Heart right ventricle (tissue), 16 donors: ENCODE measurements at regions of chr7 and their contacts with region 1.

Region 1: DNA sequence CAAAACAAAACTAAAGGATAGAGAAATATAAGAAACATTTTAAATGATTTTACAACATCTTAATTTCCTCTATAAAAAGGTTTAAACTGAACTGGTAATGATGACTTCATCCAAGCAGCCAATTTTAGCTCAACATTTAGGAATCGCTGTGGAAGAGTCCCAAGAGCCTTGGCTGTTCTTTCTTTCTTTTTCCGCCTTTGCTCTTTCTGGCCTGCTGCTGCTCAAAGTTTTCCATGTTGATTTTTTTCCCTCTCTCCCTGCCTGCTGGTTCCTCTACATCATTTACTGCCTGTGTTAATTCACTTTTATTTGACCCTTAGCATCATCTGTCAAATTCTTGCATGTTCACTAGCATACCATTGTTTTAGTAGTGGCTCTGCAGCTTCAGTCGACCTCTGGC is 146.9 kb downstream of the EVX1 start:
- DNase-seq: peak in 1 of 2 donors; percentile 27
- ATAC-seq: peak in 7 of 8 donors; percentile 42 to 80 (median 70)
- H3K4me3 ChIP-seq: no peak overlapping the region
- H3K27ac ChIP-seq: peak overlapping the region in 9 of 10 donors; percentile 16 to 79 (median 52)
- H3K4me1 ChIP-seq: peaks cover 0 to 4% (median 0%) of the 10 kb centered on the region in 9 donors
- H3K27me3 ChIP-seq: peaks cover 0 to 25% (median 10%) of the 10 kb centered on the region in 7 donors
- CTCF ChIP-seq: no peak

Region 2: GRCh38 chr7:27399791-27400567 is 10.5 kb after region 1 on chr7:
- intact Hi-C with region 1: loop called in 1 of 10 experiments (anchors 1 kb)
- DNase-seq: no peak
- ATAC-seq: no peak
- H3K4me3 ChIP-seq: no peak overlapping the region
- H3K27ac ChIP-seq: no peak overlapping the region
- H3K4me1 ChIP-seq: peaks cover 0 to 8% (median 0%) of the 10 kb centered on the region in 9 donors
- H3K27me3 ChIP-seq: peaks cover 0 to 14% (median 0%) of the 10 kb centered on the region in 7 donors
- CTCF ChIP-seq: no peak